ENCODE measurements at regions of chr10 and their contacts with region 1.

Region 1: GRCh38 chr10:70363971-70364771 is 18.3 kb downstream of the LRRC20 start:
- DNase-seq: peak; percentile 97

Region 2: DNA sequence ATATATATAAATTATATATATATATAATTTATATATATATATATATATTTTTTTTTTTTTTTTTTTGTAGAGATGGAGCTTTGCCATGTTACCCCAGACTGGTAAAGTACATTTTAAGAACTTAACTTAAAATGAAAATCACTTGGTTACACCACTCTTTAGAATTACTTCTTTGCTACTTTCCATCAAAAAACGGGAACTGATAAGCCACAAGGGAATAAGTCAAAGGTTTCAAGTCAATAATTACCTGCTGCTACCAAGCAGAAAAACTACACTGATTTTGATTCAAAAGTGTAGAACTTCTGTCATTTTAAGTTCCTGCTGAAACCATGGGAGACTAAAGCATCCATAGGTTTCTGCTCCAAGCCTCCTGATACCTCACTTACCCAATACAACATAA is 143.1 kb before region 1 on chr10:
- intact Hi-C with region 1: loop called (anchors 2 to 5 kb)
- DNase-seq: no peak

Measured in posterior vena cava (tissue), 2 donors.